ENCODE measurements at regions of chr6 and their contacts with region 1.

Region 1: GRCh38 chr6:42166444-42167141 is 6.6 kb upstream of the GUCA1A start:
- DNase-seq: no peak
- ATAC-seq: peak; percentile 93
- H3K4me3 ChIP-seq: no peak overlapping the region
- H3K27ac ChIP-seq: no peak overlapping the region
- H3K4me1 ChIP-seq: no peaks in the 10 kb centered on the region
- H3K27me3 ChIP-seq: no peaks in the 10 kb centered on the region
- CTCF ChIP-seq: peak; percentile 99

Region 2: GRCh38 chr6:41672821-41673703 is 493.5 kb before region 1 on chr6:
- intact Hi-C with region 1: no loop called
- DNase-seq: no peak
- ATAC-seq: no peak
- H3K4me3 ChIP-seq: no peak overlapping the region
- H3K27ac ChIP-seq: no peak overlapping the region
- H3K4me1 ChIP-seq: no peaks in the 10 kb centered on the region
- H3K27me3 ChIP-seq: no peaks in the 10 kb centered on the region
- CTCF ChIP-seq: no peak

Region 3: DNA sequence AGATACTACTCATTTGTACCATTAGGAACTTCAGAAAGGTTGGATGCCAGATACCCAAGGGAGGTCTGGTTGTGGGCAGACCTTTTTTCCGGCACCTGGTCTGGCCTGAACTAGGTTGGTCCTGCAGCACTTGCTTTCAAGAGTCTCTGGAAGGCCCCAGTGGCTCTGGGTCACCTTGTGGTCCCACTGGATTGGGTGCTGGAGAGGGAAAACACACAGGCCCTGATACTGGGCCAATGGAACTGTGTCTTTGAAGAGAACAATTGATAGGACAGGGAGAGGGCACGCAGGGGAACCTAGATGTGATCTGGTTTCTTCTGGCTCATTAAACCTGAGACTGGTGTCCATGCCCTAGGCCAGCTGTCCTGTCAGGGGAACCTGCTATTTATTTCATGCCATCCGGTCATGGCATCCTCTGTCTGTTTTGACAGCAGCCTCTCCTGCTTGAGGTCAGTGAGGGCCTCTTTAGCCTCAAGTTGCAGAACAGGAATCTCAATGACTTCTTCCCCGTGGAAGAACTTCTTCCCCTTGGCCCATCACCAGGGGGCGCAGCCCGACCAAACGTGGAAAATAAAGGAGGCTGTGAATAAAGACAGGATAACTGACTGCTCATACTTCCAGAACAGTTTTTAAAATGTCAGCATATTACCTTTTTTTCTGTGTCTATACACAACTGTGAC is 91.3 kb before region 1 on chr6:
- intact Hi-C with region 1: loop called (anchors 5 kb)
- DNase-seq: peak; percentile 90
- ATAC-seq: peak; percentile 91
- H3K4me3 ChIP-seq: no peak overlapping the region
- H3K27ac ChIP-seq: no peak overlapping the region
- H3K4me1 ChIP-seq: peaks cover 8% of the 10 kb centered on the region
- H3K27me3 ChIP-seq: no peaks in the 10 kb centered on the region
- CTCF ChIP-seq: peak; percentile 84

Region 4: GRCh38 chr6:42294759-42295158 is 128.2 kb after region 1 on chr6:
- intact Hi-C with region 1: no loop called
- DNase-seq: no peak
- ATAC-seq: peak; percentile 19
- H3K4me3 ChIP-seq: no peak overlapping the region
- H3K27ac ChIP-seq: no peak overlapping the region
- H3K4me1 ChIP-seq: peaks cover 3% of the 10 kb centered on the region
- H3K27me3 ChIP-seq: no peaks in the 10 kb centered on the region
- CTCF ChIP-seq: no peak

Region 5: DNA sequence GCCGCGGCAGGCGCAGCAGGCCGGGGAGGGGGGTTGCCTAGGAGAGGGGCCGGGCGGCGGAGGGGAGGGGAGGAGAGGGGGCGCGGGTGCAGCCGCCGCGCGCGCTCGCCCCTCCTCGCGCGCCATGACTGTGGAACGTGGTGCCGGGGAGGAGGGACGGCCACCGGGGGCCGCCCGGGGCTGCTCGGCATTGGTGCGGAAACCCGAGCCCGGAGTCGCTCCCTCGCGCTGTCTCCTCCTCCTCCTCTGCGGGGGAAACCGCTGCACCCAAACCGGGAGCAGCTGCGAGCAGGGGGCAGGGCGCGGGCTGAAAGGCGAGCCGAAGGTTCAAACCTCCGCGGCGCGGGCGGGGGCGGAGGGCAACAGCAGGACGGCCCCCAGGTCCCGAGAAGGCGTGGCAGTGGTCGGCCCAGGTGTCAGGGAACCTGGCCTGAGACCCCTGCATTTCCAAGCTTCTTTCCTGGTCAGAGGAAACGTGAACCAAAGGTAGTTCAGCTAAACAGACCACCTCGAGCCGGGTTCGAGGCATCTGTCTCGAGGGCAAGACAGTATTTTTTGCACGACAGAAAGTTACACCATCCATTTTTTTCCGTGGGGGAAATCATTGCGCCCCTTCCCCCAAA is 286.5 kb after region 1 on chr6:
- intact Hi-C with region 1: no loop called
- DNase-seq: peak; percentile 87
- ATAC-seq: peak; percentile 87
- H3K4me3 ChIP-seq: peak overlapping the region; percentile 85
- H3K27ac ChIP-seq: peak overlapping the region; percentile 82
- H3K4me1 ChIP-seq: peaks cover 24% of the 10 kb centered on the region
- H3K27me3 ChIP-seq: no peaks in the 10 kb centered on the region
- CTCF ChIP-seq: no peak

Region 6: DNA sequence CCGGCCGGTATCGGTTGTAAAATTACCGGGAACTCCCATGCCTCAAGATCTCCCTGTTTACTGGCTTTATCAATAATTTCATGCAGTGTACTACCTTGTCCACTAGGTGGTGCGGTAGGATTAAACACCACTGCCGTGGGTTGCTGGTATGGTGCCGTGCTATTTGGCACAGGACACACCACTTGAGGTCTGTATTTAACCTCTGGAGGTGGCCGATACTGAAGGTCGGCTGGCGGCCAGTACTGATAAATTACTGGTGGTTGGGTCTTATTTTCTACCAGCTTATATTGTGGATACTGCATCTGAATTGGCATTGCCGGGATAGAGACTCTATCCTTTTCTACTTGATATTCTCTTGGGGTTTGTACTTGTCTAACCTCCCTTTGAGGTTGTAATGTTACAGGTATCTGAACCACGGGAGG is 735.0 kb after region 1 on chr6:
- intact Hi-C with region 1: no loop called
- DNase-seq: peak; percentile 80
- ATAC-seq: peak; percentile 100
- H3K4me3 ChIP-seq: peak overlapping the region; percentile 26
- H3K27ac ChIP-seq: no peak overlapping the region
- H3K4me1 ChIP-seq: peaks cover 17% of the 10 kb centered on the region
- H3K27me3 ChIP-seq: no peaks in the 10 kb centered on the region
- CTCF ChIP-seq: peak; percentile 89

Measured in upper lobe of right lung (tissue), 1 donor.